Activated T-helper 1 cell treated with anti-CD3 and anti-CD28 coated beads, Interleukin-12 subunit alpha, Interleukin-12 subunit beta, Interleukin-2, Interleukin-4 antibody, amounts not matched to agents 30 ng/mL and 10 ng/mL and 1 ng/mL, durations not matched to agents 14 hours and 24 hours and 36 hours (primary cell): ENCODE measurements at regions of chr16 and their contacts with region 1.

Region 1: DNA sequence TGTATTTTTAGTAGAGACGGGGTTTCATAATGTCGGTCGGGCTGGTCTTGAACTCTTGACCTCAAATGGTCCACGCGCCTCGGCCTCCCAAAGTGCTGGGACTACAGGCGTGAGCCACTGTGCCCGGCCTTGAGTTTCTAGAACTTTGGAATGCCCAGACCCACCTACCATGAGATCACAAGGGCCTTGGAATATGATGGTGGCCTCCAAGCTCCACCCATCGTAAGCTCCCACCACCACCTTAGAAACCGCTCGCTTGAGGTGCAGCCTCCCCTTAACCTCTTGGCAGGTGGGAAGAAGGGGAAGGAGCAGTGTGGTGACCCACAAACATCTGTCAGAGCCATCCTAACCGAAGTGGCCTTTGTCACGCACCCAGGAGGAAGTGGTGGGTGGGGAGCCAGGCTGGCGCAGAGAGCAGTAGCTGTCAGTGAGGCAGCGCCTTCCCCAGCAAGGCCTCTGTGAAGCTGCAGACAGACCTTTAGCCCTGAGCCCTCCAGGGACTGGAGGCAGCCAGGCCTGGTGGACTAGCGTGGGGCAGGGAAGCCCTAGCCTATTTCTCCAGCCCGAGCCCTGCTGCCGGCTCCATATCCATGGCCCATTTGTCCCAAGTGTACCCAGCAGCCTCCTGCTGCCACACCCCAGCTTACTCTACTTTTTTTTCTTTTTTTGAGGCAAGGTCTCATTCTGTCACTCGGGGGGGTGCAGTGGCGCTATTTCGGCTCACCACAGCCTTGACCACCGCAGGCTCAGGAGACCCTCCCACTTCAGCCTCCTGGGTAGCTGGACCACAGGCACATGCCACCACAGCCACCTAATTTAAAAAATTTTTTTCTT is 13.1 kb upstream of the SEPHS2 start:
- DNase-seq: peak; percentile 88
- H3K4me3 Mint-ChIP-seq: peak overlapping the region; percentile 64
- H3K27ac Mint-ChIP-seq: peak overlapping the region; percentile 95
- H3K4me1 Mint-ChIP-seq: peaks cover 77% of the 10 kb centered on the region
- H3K27me3 Mint-ChIP-seq: no peaks in the 10 kb centered on the region

Region 2: DNA sequence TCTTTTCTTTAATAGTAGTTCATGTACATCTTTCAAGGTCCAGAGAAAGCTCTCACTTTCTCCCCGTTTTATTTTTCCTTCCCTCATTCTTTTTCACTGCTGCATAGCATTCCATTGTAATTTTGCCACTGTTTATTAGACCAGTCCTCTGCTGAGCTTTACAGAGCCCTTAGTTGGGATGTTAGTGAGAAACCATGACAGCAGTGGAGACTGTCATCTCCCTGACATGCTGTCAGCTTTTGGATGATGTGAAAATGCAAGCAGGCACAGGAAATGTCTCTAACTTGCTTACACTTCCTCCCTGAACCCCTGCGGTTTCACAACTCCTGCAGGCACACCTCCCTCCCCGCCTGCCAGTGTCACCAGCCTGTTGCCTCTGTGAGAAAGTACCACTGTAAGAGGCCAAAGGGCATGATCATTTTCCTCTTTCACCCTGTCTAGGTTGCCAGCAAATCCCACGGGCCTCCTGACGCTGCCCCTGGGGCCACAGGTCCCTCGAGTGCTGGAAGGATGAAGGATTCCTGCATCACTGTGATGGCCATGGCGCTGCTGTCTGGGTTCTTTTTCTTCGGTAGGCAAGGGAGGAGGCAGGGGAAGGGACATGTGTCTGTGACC is 13.7 kb after region 1 on chr16 and contains the start of gene ITGAL:
- intact Hi-C with region 1: loop called (anchors 1 kb)
- DNase-seq: peak; percentile 81
- H3K4me3 Mint-ChIP-seq: peak within 1 kb of the TSS; percentile 96
- H3K27ac Mint-ChIP-seq: peak within 1 kb of the TSS; percentile 95
- H3K4me1 Mint-ChIP-seq: peaks cover 60% of the 10 kb centered on the region
- H3K27me3 Mint-ChIP-seq: no peaks in the 10 kb centered on the region
- total RNA-seq, gene ITGAL: 259 and 287 TPM in 2 replicates

Region 3: GRCh38 chr16:30637942-30638341 is 179.2 kb after region 1 on chr16:
- intact Hi-C with region 1: no loop called
- DNase-seq: no peak
- H3K4me3 Mint-ChIP-seq: no peak overlapping the region
- H3K27ac Mint-ChIP-seq: no peak overlapping the region
- H3K4me1 Mint-ChIP-seq: peaks cover 16% of the 10 kb centered on the region
- H3K27me3 Mint-ChIP-seq: no peaks in the 10 kb centered on the region